IMR-90 (cell line): ENCODE measurements at regions of chr2 and their contacts with region 1.

Region 1: DNA sequence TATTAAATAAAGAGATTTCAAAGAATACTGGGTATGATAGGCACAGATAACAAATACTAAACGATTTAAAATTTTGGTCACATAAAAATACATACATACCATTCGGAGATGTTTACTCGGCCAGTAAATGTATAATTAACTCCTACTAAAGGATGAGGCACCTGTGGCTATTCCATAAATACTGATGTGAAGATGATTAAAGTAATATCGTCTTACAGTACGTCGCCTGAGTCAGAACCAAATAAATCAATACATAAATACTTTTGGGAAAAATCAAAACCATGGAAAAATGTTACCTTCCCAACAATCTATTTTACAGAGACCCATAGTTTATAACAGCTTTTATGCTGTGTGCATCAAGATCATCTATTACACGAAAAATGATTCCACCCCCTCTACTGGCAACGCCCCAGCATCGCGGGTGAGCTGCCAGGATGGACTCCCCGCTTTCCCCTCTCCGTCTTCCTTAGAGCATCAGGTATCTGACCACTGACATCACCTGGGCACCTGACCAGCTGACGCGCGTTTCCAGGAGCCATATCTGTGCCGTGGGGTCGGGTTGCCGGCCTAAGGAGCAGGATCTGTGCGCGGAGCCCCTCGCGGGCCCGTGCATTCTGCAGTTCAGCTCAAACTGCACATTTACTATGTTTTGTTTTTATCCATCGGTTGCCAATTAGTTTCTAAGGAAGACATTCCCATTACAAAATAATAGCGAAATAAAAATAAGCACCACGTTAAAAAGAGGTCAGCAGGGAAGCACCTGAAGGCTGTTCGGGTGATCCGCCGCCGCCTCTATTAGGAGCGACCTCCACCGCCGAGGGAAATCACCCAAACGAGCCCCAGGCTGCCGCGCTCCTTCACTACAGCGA is 901 bp downstream of the ICA1L start:
- DNase-seq: peak; percentile 36
- ATAC-seq: peak; percentile 83
- H3K4me3 ChIP-seq: peak overlapping the region; percentile 91
- H3K27ac ChIP-seq: peak overlapping the region; percentile 39
- H3K4me1 ChIP-seq: no peaks in the 10 kb centered on the region
- H3K27me3 ChIP-seq: no peaks in the 10 kb centered on the region
- CTCF ChIP-seq: peak; percentile 39
- POLR2A ChIP-seq: no peak
- RAD21 ChIP-seq: peak; percentile 45

Region 2: DNA sequence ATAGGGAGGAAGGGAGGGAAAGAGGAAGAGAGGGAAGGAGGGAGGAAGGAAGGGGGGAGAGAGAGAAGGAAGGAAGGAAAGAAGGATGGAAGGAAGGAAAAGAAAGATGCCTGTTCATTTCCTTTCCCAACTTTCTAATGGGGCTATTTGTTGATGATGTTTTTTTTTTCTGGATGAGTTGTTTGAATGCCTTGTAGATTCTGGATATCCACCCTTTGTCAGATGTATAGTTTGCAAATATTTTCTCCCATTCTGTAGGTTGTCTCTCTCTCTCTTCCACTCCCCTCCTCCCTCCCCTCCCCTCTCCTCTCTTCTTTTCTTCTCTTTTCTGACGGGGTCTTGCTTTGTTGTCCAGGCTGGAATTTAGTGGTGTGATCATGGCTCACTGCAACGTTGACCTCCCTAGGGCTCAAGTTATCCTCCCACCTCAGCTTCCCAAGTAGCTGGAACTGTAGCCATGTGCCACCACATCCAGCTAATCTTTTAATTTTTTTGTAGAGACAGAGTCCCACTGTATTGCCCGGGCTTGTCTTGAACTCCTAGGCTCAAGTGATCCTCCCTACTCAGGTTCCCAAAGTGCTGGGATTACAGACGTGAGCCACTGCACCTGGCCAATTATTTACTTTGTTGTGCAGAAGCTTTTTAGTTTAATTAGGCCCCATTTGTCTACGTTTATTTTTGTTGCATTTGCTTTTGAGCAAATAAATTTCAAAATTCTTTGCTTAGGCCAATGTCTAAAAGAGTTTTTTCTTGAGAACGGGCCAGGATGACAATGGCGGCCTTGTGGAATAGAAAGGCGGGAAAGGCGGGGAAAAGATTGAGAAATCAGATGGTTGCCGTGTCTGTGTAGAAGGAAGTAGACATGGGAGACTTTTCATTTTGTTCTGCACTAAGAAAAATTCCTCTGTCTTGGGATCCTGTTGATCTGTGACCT is 293.1 kb before region 1 on chr2:
- CTCF ChIA-PET with region 1: no interaction called
- POLR2A ChIA-PET with region 1: no interaction called
- dilution Hi-C with region 1: no loop called
- in situ Hi-C with region 1: no loop called
- intact Hi-C with region 1: loop called (anchors 5 kb)
- DNase-seq: no peak
- ATAC-seq: no peak
- H3K4me3 ChIP-seq: no peak overlapping the region
- H3K27ac ChIP-seq: no peak overlapping the region
- H3K4me1 ChIP-seq: no peaks in the 10 kb centered on the region
- H3K27me3 ChIP-seq: no peaks in the 10 kb centered on the region
- CTCF ChIP-seq: no peak
- POLR2A ChIP-seq: no peak
- RAD21 ChIP-seq: no peak

Region 3: GRCh38 chr2:202634556-202635427 is 235.9 kb before region 1 on chr2 and contains the start of gene FAM117B:
- CTCF ChIA-PET with region 1: no interaction called
- POLR2A ChIA-PET with region 1: no interaction called
- dilution Hi-C with region 1: no loop called
- in situ Hi-C with region 1: no loop called
- intact Hi-C with region 1: loop called (anchors 2 kb)
- DNase-seq: peak; percentile 92
- ATAC-seq: peak; percentile 97
- H3K4me3 ChIP-seq: peak within 1 kb of the TSS; percentile 96
- H3K27ac ChIP-seq: peak within 1 kb of the TSS; percentile 42
- H3K4me1 ChIP-seq: no peaks in the 10 kb centered on the region
- H3K27me3 ChIP-seq: no peaks in the 10 kb centered on the region
- CTCF ChIP-seq: no peak
- POLR2A ChIP-seq: no peak
- RAD21 ChIP-seq: no peak
- total RNA-seq, gene FAM117B: 0.54 and 1.1 TPM in 2 replicates

Region 4: DNA sequence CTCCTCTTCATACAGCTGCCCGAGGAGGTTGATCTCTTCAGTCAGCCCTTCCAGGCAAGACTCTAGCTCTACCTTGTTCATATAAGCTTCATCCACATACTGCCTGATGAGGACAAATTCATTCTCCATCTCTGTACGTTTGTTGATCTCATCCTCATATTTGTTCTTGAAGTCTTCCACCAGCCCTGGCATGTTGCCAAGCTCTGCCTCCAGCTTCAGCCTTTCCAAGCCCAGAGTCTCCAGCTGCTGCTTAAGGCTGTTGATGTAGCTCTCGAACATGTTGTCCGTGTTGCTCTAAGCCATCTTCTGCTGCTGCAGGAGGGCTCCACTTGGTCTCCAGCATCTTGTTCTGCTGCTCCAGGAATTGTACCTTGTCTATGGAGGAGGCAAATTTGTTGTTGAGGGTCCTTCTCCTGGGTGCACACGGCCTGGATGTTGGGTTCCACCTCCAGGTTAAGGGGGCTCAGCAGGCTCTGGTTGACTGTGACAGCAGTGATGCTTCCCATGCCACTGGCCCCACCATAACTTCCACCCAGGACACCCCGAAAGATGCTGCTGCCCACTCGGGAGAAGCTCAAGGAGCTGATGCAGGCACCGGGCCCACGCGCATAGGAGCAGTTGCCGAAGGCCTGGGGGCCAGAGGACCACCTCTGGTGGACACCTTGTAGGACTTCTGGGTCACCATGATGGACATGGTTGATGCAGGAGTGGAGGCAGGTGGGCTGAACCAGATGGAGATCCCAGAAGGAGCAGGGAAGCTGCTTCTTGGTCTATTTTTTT is 29.4 kb before region 1 on chr2:
- CTCF ChIA-PET with region 1: no interaction called
- POLR2A ChIA-PET with region 1: interaction called, 15 read pairs
- dilution Hi-C with region 1: no loop called
- in situ Hi-C with region 1: no loop called
- intact Hi-C with region 1: no loop called
- DNase-seq: no peak
- ATAC-seq: no peak
- H3K4me3 ChIP-seq: no peak overlapping the region
- H3K27ac ChIP-seq: no peak overlapping the region
- H3K4me1 ChIP-seq: no peaks in the 10 kb centered on the region
- H3K27me3 ChIP-seq: no peaks in the 10 kb centered on the region
- CTCF ChIP-seq: no peak
- POLR2A ChIP-seq: no peak
- RAD21 ChIP-seq: no peak

Region 5: DNA sequence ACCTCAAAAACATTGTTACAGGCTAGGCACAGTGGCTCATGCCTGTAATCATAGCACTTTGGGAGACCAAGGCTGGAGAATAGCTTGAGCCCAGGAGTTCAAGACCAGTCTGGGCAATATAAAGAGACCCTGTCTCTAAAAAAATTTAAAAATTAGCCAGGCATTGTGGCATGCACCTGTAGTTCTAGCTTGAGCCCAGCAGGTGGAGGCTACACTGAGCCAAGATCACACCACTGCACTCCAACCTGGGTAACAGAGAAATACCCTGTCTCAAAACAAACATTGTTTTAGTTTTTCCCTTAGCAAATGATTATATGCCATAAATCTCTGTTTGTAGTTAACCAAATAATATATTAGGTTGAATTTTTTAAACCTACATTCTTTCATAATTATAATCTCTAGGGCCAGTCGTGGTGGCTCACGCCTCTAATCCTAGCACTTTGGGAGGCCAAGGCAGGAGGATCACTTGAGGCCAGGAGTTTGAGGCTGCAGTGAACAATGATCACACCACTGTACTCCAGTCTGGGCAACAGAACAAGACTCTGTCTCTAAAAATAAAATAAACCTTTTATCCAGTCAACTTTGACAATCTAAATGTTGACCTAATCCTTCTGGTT is 354.9 kb after region 1 on chr2:
- CTCF ChIA-PET with region 1: no interaction called
- POLR2A ChIA-PET with region 1: no interaction called
- dilution Hi-C with region 1: no loop called
- in situ Hi-C with region 1: no loop called
- intact Hi-C with region 1: no loop called
- DNase-seq: peak; percentile 21
- ATAC-seq: peak; percentile 71; the same call in 1 of the 2 replicates
- H3K4me3 ChIP-seq: no peak overlapping the region
- H3K27ac ChIP-seq: no peak overlapping the region
- H3K4me1 ChIP-seq: no peaks in the 10 kb centered on the region
- H3K27me3 ChIP-seq: no peaks in the 10 kb centered on the region
- CTCF ChIP-seq: peak; percentile 50
- POLR2A ChIP-seq: no peak
- RAD21 ChIP-seq: peak; percentile 56